ENCODE measurements at regions of chr4 and their contacts with region 1.

Region 1: DNA sequence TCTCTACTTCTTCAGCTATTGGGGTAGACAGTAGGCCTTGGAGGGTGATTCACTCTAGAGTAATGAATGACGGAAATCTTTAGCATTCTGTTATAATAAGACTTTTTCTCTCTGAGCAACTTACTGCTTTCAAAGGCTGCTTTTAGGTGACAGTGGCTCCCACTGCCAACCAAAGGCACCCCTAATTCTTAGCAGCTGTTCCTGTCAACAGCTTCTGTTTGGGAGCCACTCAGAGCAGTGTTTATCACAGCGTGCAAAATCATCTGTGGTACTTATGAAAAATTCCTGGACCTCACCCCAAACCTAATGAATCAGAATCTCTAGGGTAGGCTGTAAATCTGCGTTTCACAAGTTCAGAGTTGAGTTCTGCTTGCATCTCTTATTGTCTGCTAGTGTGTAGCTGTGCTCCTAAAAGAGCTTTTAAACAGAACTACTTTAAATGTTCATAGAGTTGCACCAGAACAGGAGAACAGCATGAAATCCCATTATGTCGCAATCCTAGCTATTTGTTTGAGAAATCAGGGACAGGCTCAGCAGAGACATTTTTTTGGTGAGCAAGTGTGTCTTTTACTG is 52.8 kb upstream of the POU4F2 start:
- DNase-seq: no peak
- H3K4me3 ChIP-seq: no peak overlapping the region
- H3K27ac ChIP-seq: no peak overlapping the region
- H3K4me1 ChIP-seq: no peaks in the 10 kb centered on the region
- H3K27me3 ChIP-seq: no peaks in the 10 kb centered on the region
- CTCF ChIP-seq: no peak
- EP300 ChIP-seq: no peak
- POLR2A ChIP-seq: no peak
- RAD21 ChIP-seq: no peak

Region 2: GRCh38 chr4:146342600-146343192 is 243.2 kb before region 1 on chr4:
- CTCF ChIA-PET with region 1: interaction called, 15 read pairs
- POLR2A ChIA-PET with region 1: no interaction called
- DNase-seq: no peak
- H3K4me3 ChIP-seq: no peak overlapping the region
- H3K27ac ChIP-seq: no peak overlapping the region
- H3K4me1 ChIP-seq: no peaks in the 10 kb centered on the region
- H3K27me3 ChIP-seq: no peaks in the 10 kb centered on the region
- CTCF ChIP-seq: peak in 2 of 3 experiments; percentile 4 to 26; a peak in 2 of 4 replicates
- EP300 ChIP-seq: no peak
- POLR2A ChIP-seq: no peak
- RAD21 ChIP-seq: peak; percentile 66 to 71

Region 3: GRCh38 chr4:146486565-146486964 is 99.3 kb before region 1 on chr4:
- CTCF ChIA-PET with region 1: no interaction called
- POLR2A ChIA-PET with region 1: no interaction called
- DNase-seq: no peak
- H3K4me3 ChIP-seq: no peak overlapping the region
- H3K27ac ChIP-seq: no peak overlapping the region
- H3K4me1 ChIP-seq: no peaks in the 10 kb centered on the region
- H3K27me3 ChIP-seq: no peaks in the 10 kb centered on the region
- CTCF ChIP-seq: no peak
- EP300 ChIP-seq: no peak
- POLR2A ChIP-seq: no peak
- RAD21 ChIP-seq: no peak

Region 4: DNA sequence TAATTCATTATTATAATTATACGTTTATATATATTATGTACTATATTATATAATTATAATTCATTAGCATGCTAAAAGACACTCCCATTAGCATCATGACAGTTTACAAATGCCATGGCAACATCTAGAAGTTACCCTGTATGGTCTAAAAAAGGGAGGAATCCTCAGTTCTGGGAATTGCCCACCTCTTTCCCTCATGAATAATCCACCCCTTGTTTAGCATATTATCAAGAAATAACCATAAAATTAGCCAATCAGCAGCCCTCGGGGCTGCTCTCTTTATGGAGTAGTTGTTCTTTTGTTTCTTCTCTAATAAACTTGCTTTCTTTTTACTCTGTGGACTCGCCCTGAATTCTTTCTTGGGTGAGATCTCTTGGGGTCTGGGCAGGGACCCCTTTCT is 21.4 kb before region 1 on chr4:
- CTCF ChIA-PET with region 1: no interaction called
- POLR2A ChIA-PET with region 1: no interaction called
- DNase-seq: no peak
- H3K4me3 ChIP-seq: no peak overlapping the region
- H3K27ac ChIP-seq: no peak overlapping the region
- H3K4me1 ChIP-seq: no peaks in the 10 kb centered on the region
- H3K27me3 ChIP-seq: no peaks in the 10 kb centered on the region
- CTCF ChIP-seq: no peak
- EP300 ChIP-seq: no peak
- POLR2A ChIP-seq: no peak
- RAD21 ChIP-seq: no peak